Activated CD8-positive, alpha-beta T cell treated with anti-CD3 and anti-CD28 coated beads for 36 hours (primary cell): ENCODE measurements at regions of chr16 and their contacts with region 1.

Region 1: GRCh38 chr16:56700195-56700594 is 17.9 kb downstream of the MT1X start:
- DNase-seq: no peak
- ATAC-seq: no peak
- H3K4me3 Mint-ChIP-seq: no peak overlapping the region
- H3K27ac Mint-ChIP-seq: no peak overlapping the region
- H3K4me1 Mint-ChIP-seq: peaks cover 12% of the 10 kb centered on the region
- H3K27me3 Mint-ChIP-seq: no peaks in the 10 kb centered on the region
- CTCF ChIP-seq: no peak

Region 2: GRCh38 chr16:56576585-56577293 is 123.5 kb before region 1 on chr16:
- CTCF ChIA-PET with region 1: interaction called, 130 read pairs
- POLR2A ChIA-PET with region 1: interaction called, 7 read pairs
- intact Hi-C with region 1: loop called (anchors 1 kb)
- DNase-seq: peak; percentile 91
- ATAC-seq: peak; percentile 100
- H3K4me3 Mint-ChIP-seq: no peak overlapping the region
- H3K27ac Mint-ChIP-seq: peak overlapping the region; percentile 47
- H3K4me1 Mint-ChIP-seq: peaks cover 4% of the 10 kb centered on the region
- H3K27me3 Mint-ChIP-seq: no peaks in the 10 kb centered on the region
- CTCF ChIP-seq: peak; percentile 84

Region 3: GRCh38 chr16:56600398-56600999 is 99.7 kb before region 1 on chr16:
- CTCF ChIA-PET with region 1: interaction called, 47 read pairs
- POLR2A ChIA-PET with region 1: no interaction called
- intact Hi-C with region 1: no loop called
- DNase-seq: peak; percentile 67
- ATAC-seq: peak; percentile 81
- H3K4me3 Mint-ChIP-seq: no peak overlapping the region
- H3K27ac Mint-ChIP-seq: no peak overlapping the region
- H3K4me1 Mint-ChIP-seq: peaks cover 3% of the 10 kb centered on the region
- H3K27me3 Mint-ChIP-seq: peaks cover 6% of the 10 kb centered on the region
- CTCF ChIP-seq: peak; percentile 69

Region 4: DNA sequence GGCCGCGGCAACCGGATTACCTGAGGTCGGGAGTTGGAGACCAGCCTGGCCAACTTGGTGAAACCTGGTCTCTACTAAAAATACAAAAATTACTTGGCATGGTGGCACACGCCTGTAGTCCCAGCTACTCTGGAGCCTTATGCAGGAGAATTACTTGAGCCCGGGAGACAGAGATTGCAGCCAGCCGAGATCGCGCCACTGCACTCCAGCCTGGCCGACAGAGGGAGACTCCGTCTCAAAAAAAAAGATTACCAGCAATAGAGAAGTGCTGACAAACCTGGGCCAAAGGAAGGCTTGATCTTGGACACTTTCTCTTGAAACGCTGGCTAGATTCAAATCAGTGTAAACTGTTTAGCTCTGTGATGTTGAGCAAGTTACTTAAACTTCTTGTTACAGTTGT is 26.3 kb before region 1 on chr16:
- CTCF ChIA-PET with region 1: interaction called, 20 read pairs
- POLR2A ChIA-PET with region 1: interaction called, 5 read pairs
- intact Hi-C with region 1: no loop called
- DNase-seq: peak; percentile 59
- ATAC-seq: peak; percentile 34
- H3K4me3 Mint-ChIP-seq: no peak overlapping the region
- H3K27ac Mint-ChIP-seq: no peak overlapping the region
- H3K4me1 Mint-ChIP-seq: peaks cover 28% of the 10 kb centered on the region
- H3K27me3 Mint-ChIP-seq: peaks cover 33% of the 10 kb centered on the region
- CTCF ChIP-seq: peak; percentile 69

Region 5: GRCh38 chr16:56716761-56717160 is 16.6 kb after region 1 on chr16:
- CTCF ChIA-PET with region 1: interaction called, 15 read pairs
- POLR2A ChIA-PET with region 1: no interaction called
- intact Hi-C with region 1: no loop called
- DNase-seq: no peak
- ATAC-seq: no peak
- H3K4me3 Mint-ChIP-seq: no peak overlapping the region
- H3K27ac Mint-ChIP-seq: no peak overlapping the region
- H3K4me1 Mint-ChIP-seq: peaks cover 7% of the 10 kb centered on the region
- H3K27me3 Mint-ChIP-seq: no peaks in the 10 kb centered on the region
- CTCF ChIP-seq: no peak

Region 6: GRCh38 chr16:56737539-56737938 is 37.3 kb after region 1 on chr16:
- CTCF ChIA-PET with region 1: no interaction called
- POLR2A ChIA-PET with region 1: no interaction called
- intact Hi-C with region 1: no loop called
- DNase-seq: no peak
- ATAC-seq: no peak
- H3K4me3 Mint-ChIP-seq: no peak overlapping the region
- H3K27ac Mint-ChIP-seq: no peak overlapping the region
- H3K4me1 Mint-ChIP-seq: peaks cover 32% of the 10 kb centered on the region
- H3K27me3 Mint-ChIP-seq: no peaks in the 10 kb centered on the region
- CTCF ChIP-seq: no peak

Region 7: DNA sequence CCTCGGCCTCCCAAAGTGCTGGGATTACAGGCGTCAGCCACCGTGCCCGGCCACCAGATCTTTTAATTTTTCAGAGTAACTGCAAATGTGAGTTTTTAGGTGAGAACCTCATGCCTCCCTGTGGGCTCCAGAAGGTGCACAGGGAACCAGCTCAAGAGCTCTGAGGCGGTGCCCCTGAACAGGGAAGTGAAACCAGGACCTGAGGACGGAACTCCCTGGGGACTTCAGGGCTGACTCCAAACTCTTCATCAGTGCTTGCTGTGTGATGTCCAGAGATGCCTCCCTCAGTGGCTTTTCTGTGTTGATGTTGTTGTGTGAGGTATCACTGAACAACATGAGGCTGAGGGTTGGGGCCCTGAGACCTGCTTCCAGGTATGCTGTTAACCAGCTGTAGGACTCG is 188.6 kb after region 1 on chr16:
- CTCF ChIA-PET with region 1: no interaction called
- POLR2A ChIA-PET with region 1: no interaction called
- intact Hi-C with region 1: no loop called
- DNase-seq: no peak
- ATAC-seq: no peak
- H3K4me3 Mint-ChIP-seq: no peak overlapping the region
- H3K27ac Mint-ChIP-seq: no peak overlapping the region
- H3K4me1 Mint-ChIP-seq: no peaks in the 10 kb centered on the region
- H3K27me3 Mint-ChIP-seq: no peaks in the 10 kb centered on the region
- CTCF ChIP-seq: no peak